ENCODE measurements at regions of chr15 and their contacts with region 1.

Region 1: GRCh38 chr15:70466895-70467529 is 296.3 kb downstream of the UACA start:
- DNase-seq: peak; percentile 60
- H3K4me3 ChIP-seq: no peak overlapping the region
- H3K27ac ChIP-seq: no peak overlapping the region
- H3K4me1 ChIP-seq: no peaks in the 10 kb centered on the region
- H3K27me3 ChIP-seq: no peaks in the 10 kb centered on the region
- CTCF ChIP-seq: peak; percentile 37 to 64 (median 59)
- EP300 ChIP-seq: no peak
- POLR2A ChIP-seq: no peak

Region 2: DNA sequence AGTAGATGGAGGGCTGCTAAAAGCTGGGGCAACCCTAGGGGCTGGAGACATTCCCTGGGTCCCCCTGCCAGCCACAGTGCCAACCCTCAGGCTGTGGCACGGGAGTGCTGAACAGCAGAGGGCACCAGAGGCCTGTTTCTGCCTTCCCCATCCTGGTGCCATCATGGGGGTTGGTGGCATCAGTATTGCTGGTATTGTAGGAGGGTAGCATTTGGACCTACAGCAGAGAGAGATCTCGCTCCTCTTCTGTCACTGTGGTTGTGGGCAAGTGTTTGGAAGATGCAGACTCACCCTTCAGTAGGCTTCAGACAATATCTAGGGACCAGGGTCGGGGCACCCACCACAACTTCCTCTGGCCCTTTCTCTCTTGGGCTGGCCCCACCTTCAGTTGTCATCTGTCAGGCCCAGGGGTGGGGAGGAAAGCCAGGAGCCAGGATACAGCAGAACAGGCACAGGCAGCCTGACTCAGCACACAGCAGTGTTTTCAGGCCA is 890.9 kb before region 1 on chr15:
- in situ Hi-C with region 1: loop called in 1 of 4 experiments (anchors 10 kb)
- intact Hi-C with region 1: no loop called
- DNase-seq: peak; percentile 76
- H3K4me3 ChIP-seq: no peak overlapping the region
- H3K27ac ChIP-seq: peak overlapping the region in 1 of 4 donors; percentile 50
- H3K4me1 ChIP-seq: peaks cover 0 to 44% (median 35%) of the 10 kb centered on the region in 4 donors
- H3K27me3 ChIP-seq: no peaks in the 10 kb centered on the region
- CTCF ChIP-seq: peak; percentile 69 to 89 (median 74)
- EP300 ChIP-seq: no peak
- POLR2A ChIP-seq: no peak

Region 3: GRCh38 chr15:69735121-69735520 is 731.9 kb before region 1 on chr15:
- in situ Hi-C with region 1: loop called in 1 of 4 experiments (anchors 10 kb)
- intact Hi-C with region 1: no loop called
- DNase-seq: no peak
- H3K4me3 ChIP-seq: no peak overlapping the region
- H3K27ac ChIP-seq: peak overlapping the region in 2 of 4 donors; percentile 13 to 30
- H3K4me1 ChIP-seq: peaks cover 0 to 3% (median 0%) of the 10 kb centered on the region in 4 donors
- H3K27me3 ChIP-seq: no peaks in the 10 kb centered on the region
- CTCF ChIP-seq: no peak
- EP300 ChIP-seq: no peak
- POLR2A ChIP-seq: no peak

Measured in transverse colon (tissue), 4 donors.